Heart left ventricle (tissue), 16 donors: ENCODE measurements at regions of chr22 and their contacts with region 1.

Region 1: DNA sequence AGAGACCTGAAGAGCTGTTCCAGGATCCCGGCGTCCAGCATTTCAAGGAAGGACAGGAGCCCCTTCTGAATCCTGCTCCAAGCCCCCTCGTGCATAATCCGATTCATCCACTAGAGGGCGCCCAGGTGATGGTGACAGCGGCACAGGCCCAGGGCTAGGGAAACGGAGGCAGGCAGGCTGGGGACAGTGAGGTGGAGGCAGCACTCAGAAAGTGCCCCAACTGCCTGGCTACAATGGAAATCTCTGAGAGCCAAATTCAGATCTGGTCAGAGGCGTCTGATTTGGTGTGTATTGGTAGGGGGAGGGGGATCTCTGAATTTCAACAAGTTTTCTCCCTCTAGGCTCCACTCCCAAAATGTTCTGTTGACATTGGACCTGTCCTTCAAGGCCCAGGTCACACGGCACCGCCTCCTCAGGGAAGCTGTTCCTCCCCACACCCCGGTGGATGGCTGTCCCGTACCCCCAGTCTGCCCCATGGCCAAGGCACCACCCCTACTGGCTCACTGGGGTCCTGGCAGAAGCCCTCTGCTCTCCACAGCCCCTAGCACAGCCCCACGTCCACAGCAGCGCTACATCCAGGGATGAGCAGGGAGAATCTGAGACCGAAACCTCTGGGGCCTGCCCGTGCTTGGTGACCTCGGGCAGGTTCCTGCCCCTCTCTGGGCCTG is 142.9 kb downstream of the CRYBB2 start:
- DNase-seq: peak; percentile 61 to 84 (median 67)
- ATAC-seq: peak in 3 of 4 donors; percentile 54 to 65 (median 57)
- H3K4me3 ChIP-seq: no peak overlapping the region
- H3K27ac ChIP-seq: peak overlapping the region in 1 of 12 donors; percentile 27
- H3K4me1 ChIP-seq: peaks cover 0 to 47% (median 26%) of the 10 kb centered on the region in 12 donors
- H3K27me3 ChIP-seq: no peaks in the 10 kb centered on the region
- CTCF ChIP-seq: peak; percentile 75 to 94 (median 86)
- POLR2A ChIP-seq: no peak

Region 2: DNA sequence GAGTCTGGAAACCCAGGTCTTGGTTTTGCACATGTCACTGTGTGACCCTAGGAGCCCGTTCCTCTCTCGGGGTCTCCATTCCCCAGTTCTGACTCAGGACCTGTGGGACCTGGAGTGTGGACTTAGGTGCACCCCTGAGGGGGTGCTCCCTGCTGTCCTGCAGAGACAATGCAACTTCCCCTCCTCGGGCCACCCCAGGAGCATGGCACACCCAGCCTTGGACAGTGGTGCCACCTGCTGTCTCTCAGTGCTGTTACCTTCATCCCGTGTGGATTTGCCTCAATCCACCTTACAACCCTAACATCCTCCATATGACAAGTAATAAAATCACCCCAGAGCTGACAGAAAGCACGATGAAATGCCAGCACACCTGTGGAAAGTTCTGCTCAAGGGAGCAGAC is 190.2 kb before region 1 on chr22:
- intact Hi-C with region 1: no loop called
- DNase-seq: peak in 1 of 5 donors; percentile 55
- ATAC-seq: peak; percentile 71 to 77 (median 74)
- H3K4me3 ChIP-seq: no peak overlapping the region
- H3K27ac ChIP-seq: no peak overlapping the region
- H3K4me1 ChIP-seq: no peaks in the 10 kb centered on the region
- H3K27me3 ChIP-seq: no peaks in the 10 kb centered on the region
- CTCF ChIP-seq: peak; percentile 21 to 65 (median 52)
- POLR2A ChIP-seq: no peak

Region 3: DNA sequence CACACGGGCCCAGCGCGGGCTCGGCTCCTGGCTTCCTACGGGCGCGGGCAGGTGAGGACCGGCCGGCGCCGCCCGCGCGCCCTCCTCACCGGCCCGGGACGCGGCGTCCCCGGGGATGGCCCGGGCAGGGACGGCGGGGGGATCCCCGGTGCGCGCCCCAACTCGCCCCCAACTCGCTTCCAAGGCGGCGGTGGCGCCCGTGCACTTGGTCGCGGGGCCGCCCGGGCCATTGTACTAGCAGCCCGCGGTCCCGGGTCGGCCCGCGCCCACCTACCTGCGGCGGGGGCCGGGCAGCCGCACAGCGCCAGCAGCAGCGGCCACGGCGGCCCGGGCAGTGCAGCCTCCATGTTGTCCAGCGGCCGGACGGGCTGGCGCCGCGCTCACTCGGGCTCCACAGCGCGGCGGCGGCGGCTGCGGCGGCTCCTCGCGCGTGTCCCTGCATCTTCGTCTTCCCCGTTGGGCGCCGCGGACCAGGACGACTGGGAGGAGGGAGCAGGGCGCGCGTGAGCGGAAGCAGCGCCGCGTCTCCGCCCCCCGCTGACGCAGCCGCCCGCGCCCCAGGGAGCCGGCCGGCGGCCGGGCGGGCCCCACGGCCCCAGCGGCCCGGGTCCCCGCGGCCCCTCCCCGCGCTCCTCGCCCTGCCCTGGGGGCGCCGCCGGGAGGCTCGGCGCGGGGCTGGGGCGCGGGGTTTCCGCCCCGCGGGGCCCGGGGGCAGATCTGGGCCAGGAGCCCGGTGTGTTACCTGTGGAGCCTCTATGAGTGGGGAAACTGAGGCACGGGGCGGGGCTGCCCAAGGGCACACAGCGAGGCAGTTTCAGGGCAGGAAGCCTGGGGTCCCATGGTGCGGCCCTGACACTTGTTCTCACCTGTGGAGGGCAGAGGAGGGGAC is 42.8 kb after region 1 on chr22:
- intact Hi-C with region 1: loop called in 8 of 10 experiments (anchors 1 to 5 kb)
- DNase-seq: peak; percentile 84 to 95 (median 89)
- ATAC-seq: peak; percentile 38 to 80 (median 68)
- H3K4me3 ChIP-seq: peak overlapping the region; percentile 53 to 87 (median 72)
- H3K27ac ChIP-seq: peak overlapping the region; percentile 69 to 97 (median 88)
- H3K4me1 ChIP-seq: peaks cover 16 to 55% (median 44%) of the 10 kb centered on the region in 12 donors
- H3K27me3 ChIP-seq: no peaks in the 10 kb centered on the region
- CTCF ChIP-seq: no peak
- POLR2A ChIP-seq: peak in 1 of 2 donors; percentile 78

Region 4: DNA sequence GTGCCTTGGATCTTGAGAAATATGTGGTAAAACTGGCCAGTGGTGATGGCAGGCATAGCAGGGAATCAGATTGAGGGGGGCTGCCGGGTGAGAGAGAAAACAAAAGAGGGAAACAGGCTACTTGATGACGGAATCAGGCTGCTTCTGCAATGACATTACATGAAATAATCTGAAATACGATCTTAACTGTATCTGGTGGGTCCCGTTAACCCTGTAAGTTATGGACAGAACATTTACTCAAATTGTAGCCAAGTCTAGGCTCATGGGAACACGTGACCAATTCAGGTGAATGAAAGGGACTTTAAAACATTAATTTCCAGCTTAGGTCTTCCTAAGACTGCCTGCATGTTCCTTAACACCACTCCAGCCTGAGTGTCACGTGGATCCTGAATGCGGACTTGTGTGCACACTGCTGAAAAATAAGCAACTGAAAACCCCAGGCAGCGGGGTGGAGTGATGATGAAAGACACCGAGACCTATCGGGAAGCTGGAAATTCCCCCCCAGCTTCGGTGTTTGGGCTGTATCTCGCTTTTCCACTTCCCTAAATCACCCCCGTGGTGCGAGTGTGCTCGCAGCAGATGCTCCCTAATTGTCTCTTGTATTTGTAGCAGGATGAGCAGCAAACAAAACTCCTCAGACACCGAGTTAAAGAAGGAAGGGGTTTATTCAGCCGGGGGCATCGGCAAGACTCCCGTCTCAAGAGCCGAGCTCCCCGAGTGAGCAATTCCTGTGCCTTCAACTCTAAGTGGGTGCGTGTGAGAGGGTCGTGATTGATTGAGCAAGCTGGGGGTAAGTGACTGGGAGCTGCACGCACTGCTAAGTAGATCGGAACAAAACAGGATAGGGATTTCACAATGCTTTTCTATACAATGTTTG is 57.1 kb after region 1 on chr22:
- intact Hi-C with region 1: loop called in 5 of 10 experiments (anchors 5 kb)
- DNase-seq: no peak
- ATAC-seq: peak in 3 of 4 donors; percentile 43 to 75 (median 60)
- H3K4me3 ChIP-seq: peak overlapping the region in 8 of 12 donors; percentile 2 to 27 (median 11)
- H3K27ac ChIP-seq: peak overlapping the region in 1 of 12 donors; percentile 29
- H3K4me1 ChIP-seq: peaks cover 3 to 29% (median 12%) of the 10 kb centered on the region in 12 donors
- H3K27me3 ChIP-seq: peaks cover 21 to 50% (median 46%) of the 10 kb centered on the region in 9 donors
- CTCF ChIP-seq: no peak
- POLR2A ChIP-seq: no peak

Region 5: DNA sequence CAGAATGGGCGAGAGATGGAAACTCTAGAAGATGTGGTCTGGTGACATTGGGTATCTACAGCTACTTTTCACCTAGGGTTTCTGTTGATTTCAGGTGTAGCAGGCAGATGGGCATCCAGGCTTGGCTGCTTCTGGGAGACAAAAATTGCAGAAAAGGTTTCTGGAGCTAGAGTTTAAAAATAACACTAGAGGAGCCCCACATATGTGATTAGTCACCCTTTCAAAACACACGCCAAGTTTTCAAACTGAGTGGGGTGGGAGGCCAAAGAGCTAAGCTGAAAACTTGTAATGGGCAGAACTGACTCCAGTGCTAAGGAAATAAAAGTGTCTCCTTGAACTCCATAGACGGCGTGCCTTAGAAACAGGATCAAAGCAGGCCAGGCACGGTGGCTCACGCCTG is 282.9 kb after region 1 on chr22:
- intact Hi-C with region 1: no loop called
- DNase-seq: no peak
- ATAC-seq: peak in 1 of 4 donors; percentile 22
- H3K4me3 ChIP-seq: no peak overlapping the region
- H3K27ac ChIP-seq: no peak overlapping the region
- H3K4me1 ChIP-seq: peaks cover 0 to 15% (median 5%) of the 10 kb centered on the region in 12 donors
- H3K27me3 ChIP-seq: no peaks in the 10 kb centered on the region
- CTCF ChIP-seq: no peak
- POLR2A ChIP-seq: no peak